ENCODE measurements at regions of chr6 and their contacts with region 1.

Region 1: DNA sequence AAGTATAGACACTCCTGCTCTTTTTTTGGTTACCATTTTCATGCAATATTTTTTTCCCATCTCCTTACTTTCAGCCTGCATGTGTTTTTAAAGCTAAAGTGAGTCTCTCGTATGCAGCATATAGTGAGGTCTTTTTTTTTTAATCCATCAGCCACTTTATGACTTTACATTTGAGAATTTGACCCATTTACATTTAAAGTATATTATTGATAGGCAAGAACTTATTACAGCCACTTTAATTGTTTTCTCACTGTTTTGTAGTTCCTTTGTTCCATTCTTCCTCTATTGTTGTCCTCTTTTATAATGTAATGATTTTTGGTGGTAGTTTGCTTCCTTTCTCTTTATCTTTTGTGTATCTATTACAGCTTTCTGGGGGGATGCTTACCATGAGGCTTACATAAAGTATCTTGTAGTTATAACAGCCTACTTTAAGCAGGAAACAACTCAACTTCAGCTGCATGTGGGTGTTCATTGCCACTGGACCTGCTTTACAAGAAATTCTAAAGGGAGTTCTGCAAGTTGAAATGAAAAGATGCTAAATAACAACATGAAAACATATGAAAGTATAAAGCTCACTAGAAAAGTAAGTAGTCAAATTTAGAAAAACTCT is 71.8 kb downstream of the TNFAIP3 start:
- DNase-seq: no peak
- H3K4me3 ChIP-seq: no peak overlapping the region
- CTCF ChIP-seq: no peak

Region 2: DNA sequence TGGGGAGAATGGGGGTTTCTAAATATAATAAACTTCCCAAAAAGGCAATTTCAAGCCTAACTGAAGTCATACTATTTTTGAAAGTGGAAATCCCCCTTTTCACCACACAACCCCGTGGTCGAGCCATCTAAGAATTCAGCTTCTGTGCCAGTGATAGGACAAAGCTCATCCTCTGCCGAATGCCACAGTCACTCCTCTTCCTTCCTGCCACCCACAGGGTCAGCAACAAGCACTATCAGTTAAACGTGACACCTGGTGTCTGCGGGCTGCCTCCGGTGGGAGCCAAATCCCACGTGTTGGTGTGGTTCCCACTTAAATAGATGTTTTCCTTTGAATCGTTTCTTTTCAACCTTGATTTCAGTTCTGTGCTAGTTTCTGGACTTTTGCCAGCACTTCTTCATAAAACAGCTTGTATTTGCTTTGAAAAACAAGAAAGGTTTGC is 11.1 kb before region 1 on chr6:
- CTCF ChIA-PET with region 1: interaction called, 40 read pairs
- POLR2A ChIA-PET with region 1: no interaction called
- DNase-seq: no peak
- H3K4me3 ChIP-seq: no peak overlapping the region
- CTCF ChIP-seq: no peak

Measured in AG04449 (cell line).